ENCODE measurements at regions of chr13 and their contacts with region 1.

Region 1: GRCh38 chr13:79108914-79109643 is 297.0 kb downstream of the RBM26 start:
- DNase-seq: no peak
- H3K4me3 ChIP-seq: no peak overlapping the region
- H3K27ac ChIP-seq: no peak overlapping the region
- H3K4me1 ChIP-seq: no peaks in the 10 kb centered on the region
- H3K27me3 ChIP-seq: no peaks in the 10 kb centered on the region
- CTCF ChIP-seq: no peak
- POLR2A ChIP-seq: no peak

Region 2: GRCh38 chr13:80029170-80029569 is 920.1 kb after region 1 on chr13:
- intact Hi-C with region 1: loop called (anchors 10 kb)
- DNase-seq: no peak
- H3K4me3 ChIP-seq: no peak overlapping the region
- H3K27ac ChIP-seq: no peak overlapping the region
- H3K4me1 ChIP-seq: no peaks in the 10 kb centered on the region
- H3K27me3 ChIP-seq: no peaks in the 10 kb centered on the region
- CTCF ChIP-seq: no peak
- POLR2A ChIP-seq: no peak

Measured in breast epithelium (tissue), 4 donors.